BJ (cell line): ENCODE measurements at regions of chr5 and their contacts with region 1.

Region 1: DNA sequence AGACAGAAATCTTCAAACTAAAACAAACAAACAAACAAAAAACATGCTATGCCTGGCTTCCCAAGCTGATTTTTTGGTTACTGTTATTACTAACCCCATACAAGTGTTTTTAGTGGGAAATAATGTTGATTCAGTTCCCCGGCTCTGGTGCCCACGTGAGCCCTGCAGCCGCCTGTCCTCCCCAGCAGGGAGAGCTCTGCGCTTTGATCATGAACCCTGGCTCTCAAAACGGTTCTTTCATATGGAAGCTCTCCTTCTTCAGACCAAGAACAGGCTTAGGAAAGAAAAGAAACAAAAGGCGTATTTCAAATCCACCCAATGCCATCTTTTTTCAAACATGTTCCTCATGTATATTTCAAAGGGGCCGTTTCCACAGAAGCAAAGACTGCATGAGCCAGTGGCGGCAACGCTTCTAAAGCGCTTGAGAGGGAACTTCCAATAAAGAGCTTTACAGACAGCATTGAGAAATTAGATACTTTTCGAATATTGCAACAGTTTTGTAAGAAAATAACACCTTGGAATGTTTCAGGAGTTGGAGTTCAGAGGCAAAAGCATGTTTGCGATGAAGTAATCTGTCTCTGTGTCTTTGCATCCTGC is 74.8 kb downstream of the ICE1 start:
- DNase-seq: no peak
- H3K4me3 ChIP-seq: no peak overlapping the region
- H3K27me3 ChIP-seq: peaks cover 2% of the 10 kb centered on the region; the same call in 1 of the 2 replicates
- CTCF ChIP-seq: peak; percentile 83

Region 2: GRCh38 chr5:5473224-5473623 is 24.0 kb before region 1 on chr5:
- CTCF ChIA-PET with region 1: no interaction called
- POLR2A ChIA-PET with region 1: no interaction called
- DNase-seq: no peak
- H3K4me3 ChIP-seq: no peak overlapping the region
- H3K27me3 ChIP-seq: no peaks in the 10 kb centered on the region
- CTCF ChIP-seq: no peak

Region 3: DNA sequence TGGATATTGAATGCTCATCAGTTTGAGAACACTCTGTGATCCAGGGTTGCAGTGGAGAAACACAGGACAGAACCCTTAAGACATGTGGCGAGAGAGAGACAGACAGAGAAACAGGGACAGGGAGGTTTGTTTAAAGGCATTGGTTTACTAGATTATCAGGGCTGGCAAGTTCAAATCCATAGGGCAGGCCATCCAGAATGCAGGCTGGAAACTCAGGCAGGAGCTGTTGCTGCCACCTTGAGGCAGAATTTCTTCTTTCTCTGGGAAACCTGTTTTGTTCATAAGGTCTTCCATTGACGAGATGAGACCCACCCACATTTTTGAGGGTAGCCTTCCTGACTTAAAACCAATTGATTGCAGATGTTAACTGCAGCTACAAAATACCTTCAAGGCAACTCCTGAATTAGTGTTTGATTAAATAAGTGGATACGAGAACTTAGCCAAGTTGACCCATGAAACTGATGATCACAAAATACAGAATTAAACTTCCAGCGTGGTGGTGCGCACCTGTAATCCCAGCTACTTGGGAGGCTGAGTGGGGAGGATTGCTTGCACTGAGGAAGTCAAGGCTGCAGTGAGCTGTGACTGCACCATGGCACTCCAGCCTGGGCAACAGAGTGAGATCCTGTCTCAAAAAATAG is 1079.7 kb after region 1 on chr5:
- CTCF ChIA-PET with region 1: interaction called, 19 read pairs
- POLR2A ChIA-PET with region 1: no interaction called
- DNase-seq: peak; percentile 20
- H3K4me3 ChIP-seq: no peak overlapping the region
- H3K27me3 ChIP-seq: peaks cover 7% of the 10 kb centered on the region
- CTCF ChIP-seq: peak; percentile 68